BJ (cell line): ENCODE measurements at regions of chr18 and their contacts with region 1.

Region 1: GRCh38 chr18:80157708-80158343 is 48.8 kb downstream of the ADNP2 start:
- DNase-seq: no peak
- H3K4me3 ChIP-seq: no peak overlapping the region
- H3K27me3 ChIP-seq: no peaks in the 10 kb centered on the region
- CTCF ChIP-seq: peak; percentile 98

Region 2: DNA sequence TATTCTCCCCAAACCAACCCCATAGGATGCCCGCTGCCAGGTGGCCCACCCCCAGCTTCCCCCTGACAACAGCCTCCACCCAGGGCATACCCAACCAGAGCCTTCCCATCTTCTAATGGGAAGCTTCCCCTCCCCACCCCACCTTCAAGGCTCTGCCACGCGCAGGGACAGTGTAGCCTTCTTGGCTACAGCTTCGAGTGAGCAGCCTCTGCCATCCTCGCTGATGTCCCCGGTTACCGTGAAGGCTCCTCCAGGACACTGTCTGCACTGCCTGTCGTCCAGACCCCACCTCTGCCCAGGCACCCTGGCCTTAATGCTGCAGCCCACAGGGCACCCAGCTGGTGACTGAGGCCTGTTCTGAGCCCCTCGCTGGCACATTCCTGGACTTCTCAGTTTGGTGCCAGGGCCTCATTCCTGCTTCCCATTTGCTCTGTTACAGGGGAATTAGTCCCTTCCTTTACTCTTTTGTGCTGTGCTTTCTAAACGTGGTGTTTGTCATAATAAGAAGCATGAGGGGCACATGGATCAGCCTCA is 61.7 kb before region 1 on chr18:
- CTCF ChIA-PET with region 1: no interaction called
- POLR2A ChIA-PET with region 1: no interaction called
- DNase-seq: no peak
- H3K4me3 ChIP-seq: no peak overlapping the region
- H3K27me3 ChIP-seq: no peaks in the 10 kb centered on the region
- CTCF ChIP-seq: no peak

Region 3: GRCh38 chr18:80147418-80148325 is 10.2 kb before region 1 on chr18:
- CTCF ChIA-PET with region 1: interaction called, 43 read pairs
- POLR2A ChIA-PET with region 1: no interaction called
- DNase-seq: peak; percentile 32
- H3K4me3 ChIP-seq: peak overlapping the region; percentile 66
- H3K27me3 ChIP-seq: no peaks in the 10 kb centered on the region
- CTCF ChIP-seq: no peak

Region 4: DNA sequence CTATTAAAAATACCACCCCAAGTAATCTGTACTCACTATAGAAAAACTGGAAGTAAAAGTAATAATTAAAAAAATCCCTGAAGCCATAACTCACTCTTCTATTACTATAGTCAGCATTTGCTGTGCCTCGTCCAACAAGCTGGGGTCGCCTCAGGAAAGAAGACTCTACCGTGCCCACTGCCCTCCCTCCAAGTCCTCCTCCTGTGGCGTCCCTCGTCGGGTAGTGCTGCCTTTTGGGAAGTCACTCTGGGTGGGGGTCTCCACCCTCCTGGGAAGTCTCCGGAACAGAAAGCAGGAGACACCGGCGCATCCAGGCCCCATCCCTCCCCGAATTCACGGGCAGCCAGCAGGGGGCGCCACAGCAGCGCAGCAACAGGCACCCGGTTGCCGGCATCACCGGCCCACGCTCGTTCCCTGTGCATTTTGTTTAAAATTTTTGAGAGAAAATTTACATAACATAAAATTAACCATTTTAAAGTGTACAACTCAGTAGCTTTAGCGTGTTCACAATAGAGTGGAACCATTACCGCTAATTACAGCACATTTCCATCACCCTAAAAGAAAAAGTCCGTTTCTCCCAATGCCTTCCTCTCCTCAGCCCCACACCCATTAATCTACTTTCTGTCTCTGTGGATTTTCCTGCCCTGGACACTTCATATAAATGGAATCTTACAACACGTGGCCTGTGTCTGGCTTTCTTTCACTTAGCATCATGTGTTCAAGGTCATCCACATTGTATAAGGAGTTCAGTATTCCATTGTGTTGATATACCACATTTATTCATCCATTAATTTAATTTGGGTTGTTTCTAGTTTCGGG is 13.4 kb after region 1 on chr18:
- CTCF ChIA-PET with region 1: interaction called, 15 read pairs
- POLR2A ChIA-PET with region 1: no interaction called
- DNase-seq: no peak
- H3K4me3 ChIP-seq: no peak overlapping the region
- H3K27me3 ChIP-seq: 0 out of 2 replicates have a peak, but pooled peaks cover 2% of the 10 kb centered on the region
- CTCF ChIP-seq: peak; percentile 83

Region 5: GRCh38 chr18:80253871-80254492 is 96.2 kb after region 1 on chr18:
- CTCF ChIA-PET with region 1: interaction called, 78 read pairs
- POLR2A ChIA-PET with region 1: no interaction called
- DNase-seq: no peak
- H3K4me3 ChIP-seq: no peak overlapping the region
- H3K27me3 ChIP-seq: 0 out of 2 replicates have a peak, but pooled peaks cover 1% of the 10 kb centered on the region
- CTCF ChIP-seq: no peak